WTC11 (cell line): ENCODE measurements at regions of chr4 and their contacts with region 1.

Region 1: DNA sequence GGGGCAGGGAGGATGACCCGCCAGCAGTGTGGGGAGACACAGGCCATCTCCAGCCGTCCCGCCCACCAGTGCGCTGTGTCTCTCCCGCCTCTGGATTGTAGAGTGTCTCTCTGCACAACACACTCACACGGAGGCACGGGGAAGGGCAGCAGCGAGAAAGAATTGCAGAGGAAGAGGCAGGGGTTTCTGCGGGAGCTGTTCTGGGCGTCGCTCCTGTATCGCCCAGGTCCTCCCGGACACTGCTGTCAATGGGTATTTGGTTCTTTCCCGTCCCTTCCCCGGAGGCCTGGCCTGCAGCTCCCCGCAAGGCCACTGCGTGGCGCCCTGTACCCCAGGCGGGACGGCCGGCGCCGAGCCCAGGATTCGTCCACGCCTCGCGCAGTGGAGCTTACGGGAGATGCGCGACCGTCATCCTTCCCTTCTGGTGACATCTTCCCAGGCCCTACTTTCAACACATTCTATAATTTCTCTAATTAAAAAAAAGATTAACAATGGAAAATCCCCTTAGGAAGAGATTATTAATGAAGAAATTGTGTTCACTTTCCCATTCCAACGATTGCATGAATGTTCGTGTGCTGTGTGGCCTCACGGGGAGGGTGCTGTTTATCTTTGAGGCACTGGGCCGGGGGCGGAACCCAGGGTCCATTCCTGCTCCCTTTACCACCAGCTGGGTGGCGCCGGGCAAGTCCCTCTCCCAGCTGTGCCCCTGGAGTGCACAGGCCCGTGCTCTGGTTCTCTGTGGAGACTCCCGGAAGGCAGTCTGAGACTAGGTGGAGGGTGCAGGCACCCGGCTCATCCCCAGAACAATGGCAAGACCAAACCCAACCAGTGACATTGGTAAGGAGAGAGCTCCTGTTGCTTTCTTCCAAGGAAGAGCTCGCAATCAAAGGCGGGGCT is 95.7 kb downstream of the CPZ start:
- DNase-seq: peak; percentile 89
- ATAC-seq: peak; percentile 97
- H3K4me3 Mint-ChIP-seq: no peak overlapping the region
- H3K27ac Mint-ChIP-seq: no peak overlapping the region
- H3K4me1 Mint-ChIP-seq: 0 out of 2 replicates have a peak, but pooled peaks cover 2% of the 10 kb centered on the region
- H3K27me3 Mint-ChIP-seq: peaks cover 48% of the 10 kb centered on the region
- CTCF ChIP-seq: peak; percentile 86

Region 2: GRCh38 chr4:8558080-8558960 is 130.0 kb before region 1 on chr4:
- CTCF ChIA-PET with region 1: no interaction called
- POLR2A ChIA-PET with region 1: no interaction called
- DNase-seq: no peak
- ATAC-seq: no peak
- H3K4me3 Mint-ChIP-seq: no peak overlapping the region
- H3K27ac Mint-ChIP-seq: no peak overlapping the region
- H3K4me1 Mint-ChIP-seq: peaks cover 16% of the 10 kb centered on the region
- H3K27me3 Mint-ChIP-seq: no peaks in the 10 kb centered on the region
- CTCF ChIP-seq: no peak

Region 3: DNA sequence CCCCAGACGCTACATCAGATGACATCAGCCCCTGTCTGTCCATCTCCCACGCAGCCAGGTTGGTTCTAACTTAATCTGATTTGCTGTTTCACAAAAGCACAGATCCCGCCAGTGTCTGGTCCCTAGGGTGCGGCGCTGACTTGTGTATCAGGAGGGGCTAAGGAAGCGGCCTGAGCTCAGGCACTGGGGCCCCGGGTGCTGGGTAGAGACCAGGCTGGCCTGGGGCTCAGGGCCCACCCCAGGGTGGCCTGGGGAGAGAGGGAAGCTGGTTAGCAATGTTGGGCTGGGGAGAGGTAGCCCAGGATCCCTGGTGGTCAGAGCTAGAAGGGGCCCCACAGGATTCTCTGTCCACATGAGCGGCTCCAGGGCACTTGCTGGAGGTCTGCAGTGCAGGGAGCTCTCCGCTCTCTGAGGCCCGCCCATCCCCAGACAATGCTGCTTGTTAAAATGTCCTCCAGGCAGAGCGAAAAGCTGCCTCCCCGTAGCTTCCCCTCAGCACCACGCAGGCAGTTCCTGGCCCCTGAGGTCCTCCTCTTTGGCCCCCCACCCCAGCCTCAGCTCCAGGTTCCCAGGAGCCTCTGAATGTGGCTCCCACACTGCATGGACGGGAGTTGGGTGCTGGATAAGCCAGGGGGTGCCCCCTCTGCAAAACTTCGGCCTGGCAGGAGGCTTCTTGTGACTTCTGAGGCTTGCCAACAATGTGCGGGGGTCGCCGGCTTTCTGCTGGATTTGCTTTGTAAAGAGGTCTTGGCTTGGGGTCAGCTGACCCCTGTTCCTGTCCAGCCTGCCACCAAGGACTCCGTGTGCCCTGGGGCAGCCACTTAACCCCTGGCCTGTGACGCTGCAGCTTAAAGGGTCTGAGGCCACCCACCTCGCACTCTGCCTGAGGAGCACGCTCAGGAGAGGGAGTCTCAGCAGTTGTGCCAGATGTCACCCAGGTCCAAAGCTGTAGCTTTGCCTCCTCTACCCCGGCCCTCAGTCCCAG is 17.2 kb after region 1 on chr4:
- CTCF ChIA-PET with region 1: interaction called, 23 read pairs
- POLR2A ChIA-PET with region 1: no interaction called
- DNase-seq: peak; percentile 15
- ATAC-seq: peak; percentile 40
- H3K4me3 Mint-ChIP-seq: no peak overlapping the region
- H3K27ac Mint-ChIP-seq: no peak overlapping the region
- H3K4me1 Mint-ChIP-seq: peaks cover 9% of the 10 kb centered on the region
- H3K27me3 Mint-ChIP-seq: no peaks in the 10 kb centered on the region
- CTCF ChIP-seq: no peak

Region 4: GRCh38 chr4:8770518-8771257 is 82.4 kb after region 1 on chr4:
- CTCF ChIA-PET with region 1: interaction called, 14 read pairs
- POLR2A ChIA-PET with region 1: no interaction called
- DNase-seq: no peak
- ATAC-seq: peak; percentile 17; the same call in 1 of the 2 replicates
- H3K4me3 Mint-ChIP-seq: no peak overlapping the region
- H3K27ac Mint-ChIP-seq: peak overlapping the region; percentile 8; the same call in 1 of the 2 replicates
- H3K4me1 Mint-ChIP-seq: peaks cover 8% of the 10 kb centered on the region
- H3K27me3 Mint-ChIP-seq: no peaks in the 10 kb centered on the region; the same call in 1 of the 2 replicates
- CTCF ChIP-seq: no peak

Region 5: DNA sequence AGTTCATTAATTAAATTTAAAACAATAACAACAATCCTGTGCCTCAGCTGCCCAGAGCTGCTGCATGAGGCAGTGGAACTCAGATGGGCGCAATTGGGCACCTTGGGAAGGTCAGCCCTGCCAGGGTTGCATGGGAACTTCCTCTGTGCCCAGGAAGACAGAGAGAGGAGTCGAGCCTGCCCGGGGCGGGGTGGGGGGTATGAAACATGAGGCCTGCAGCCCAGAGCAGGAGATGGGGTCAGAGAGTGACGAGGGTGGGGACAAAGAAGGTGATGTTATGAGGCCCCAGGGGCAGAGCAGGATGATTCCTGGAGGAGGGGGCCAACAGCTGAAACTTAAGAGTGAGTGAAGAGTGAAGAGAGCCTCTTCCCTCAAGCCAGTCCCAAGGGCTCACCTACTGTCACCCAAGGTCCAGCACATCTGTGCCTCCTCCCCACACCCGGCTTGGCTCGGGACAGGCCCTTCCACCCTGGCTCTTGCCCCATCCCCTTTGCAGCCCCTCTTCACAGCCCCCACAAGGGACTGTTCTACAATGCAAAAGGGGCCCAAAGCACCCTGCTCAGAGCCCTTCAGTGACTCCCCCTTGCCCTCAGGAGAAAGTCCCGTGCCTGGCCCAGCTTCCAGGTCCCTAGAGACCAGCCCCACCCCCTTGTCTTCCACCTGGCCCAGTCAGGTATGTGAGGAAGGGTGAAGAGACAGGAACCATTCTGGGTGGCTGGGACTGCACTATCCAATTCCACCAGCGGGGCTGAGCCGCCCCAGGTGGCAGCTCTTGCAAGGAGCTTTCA is 151.9 kb after region 1 on chr4:
- CTCF ChIA-PET with region 1: interaction called, 10 read pairs
- POLR2A ChIA-PET with region 1: no interaction called
- DNase-seq: no peak
- ATAC-seq: peak; percentile 78
- H3K4me3 Mint-ChIP-seq: no peak overlapping the region
- H3K27ac Mint-ChIP-seq: no peak overlapping the region
- H3K4me1 Mint-ChIP-seq: peaks cover 11% of the 10 kb centered on the region
- H3K27me3 Mint-ChIP-seq: peaks cover under 1% of the 10 kb centered on the region; the same call in 1 of the 2 replicates
- CTCF ChIP-seq: no peak

Region 6: DNA sequence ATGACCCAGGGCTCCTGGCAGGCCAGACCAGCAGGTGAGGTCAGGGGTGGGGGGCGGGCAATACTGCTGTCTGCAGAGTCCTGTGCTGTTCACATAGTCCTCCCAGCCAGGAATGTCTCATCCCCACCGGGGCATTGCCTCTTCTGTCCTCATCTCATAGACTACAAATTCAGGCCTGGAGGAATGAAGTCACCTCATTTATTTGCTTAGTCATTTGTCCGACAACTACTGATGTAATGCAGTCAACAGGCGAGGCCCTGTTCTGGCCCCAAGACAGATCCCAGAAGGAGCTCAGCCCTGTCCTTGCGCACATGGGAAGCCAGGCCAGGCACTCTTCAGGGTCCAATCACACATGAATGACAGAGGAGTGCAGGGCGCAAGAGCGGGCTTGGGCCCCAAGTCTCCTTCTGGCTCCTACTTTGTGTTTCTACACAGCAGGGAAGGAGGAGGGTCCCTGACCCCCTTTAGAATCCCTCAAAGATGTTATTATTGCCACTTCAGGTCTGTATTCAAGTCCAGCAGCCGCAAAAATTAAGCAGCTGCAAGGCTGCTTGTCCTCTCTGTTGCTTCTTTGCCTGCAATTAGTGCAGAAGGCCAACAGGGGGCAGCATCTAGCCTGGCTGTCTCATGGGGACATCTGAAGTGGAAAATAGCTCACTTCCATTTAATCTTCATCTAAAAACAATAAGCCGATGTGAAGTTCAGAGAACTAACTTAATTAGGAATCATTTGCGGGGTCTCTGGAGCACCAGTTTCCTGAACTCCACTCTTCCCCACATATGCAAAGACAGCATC is 198.5 kb after region 1 on chr4:
- CTCF ChIA-PET with region 1: interaction called, 27 read pairs
- POLR2A ChIA-PET with region 1: no interaction called
- DNase-seq: no peak
- ATAC-seq: no peak
- H3K4me3 Mint-ChIP-seq: no peak overlapping the region
- H3K27ac Mint-ChIP-seq: no peak overlapping the region
- H3K4me1 Mint-ChIP-seq: peaks cover 19% of the 10 kb centered on the region
- H3K27me3 Mint-ChIP-seq: peaks cover 97% of the 10 kb centered on the region
- CTCF ChIP-seq: peak; percentile 60

Region 7: DNA sequence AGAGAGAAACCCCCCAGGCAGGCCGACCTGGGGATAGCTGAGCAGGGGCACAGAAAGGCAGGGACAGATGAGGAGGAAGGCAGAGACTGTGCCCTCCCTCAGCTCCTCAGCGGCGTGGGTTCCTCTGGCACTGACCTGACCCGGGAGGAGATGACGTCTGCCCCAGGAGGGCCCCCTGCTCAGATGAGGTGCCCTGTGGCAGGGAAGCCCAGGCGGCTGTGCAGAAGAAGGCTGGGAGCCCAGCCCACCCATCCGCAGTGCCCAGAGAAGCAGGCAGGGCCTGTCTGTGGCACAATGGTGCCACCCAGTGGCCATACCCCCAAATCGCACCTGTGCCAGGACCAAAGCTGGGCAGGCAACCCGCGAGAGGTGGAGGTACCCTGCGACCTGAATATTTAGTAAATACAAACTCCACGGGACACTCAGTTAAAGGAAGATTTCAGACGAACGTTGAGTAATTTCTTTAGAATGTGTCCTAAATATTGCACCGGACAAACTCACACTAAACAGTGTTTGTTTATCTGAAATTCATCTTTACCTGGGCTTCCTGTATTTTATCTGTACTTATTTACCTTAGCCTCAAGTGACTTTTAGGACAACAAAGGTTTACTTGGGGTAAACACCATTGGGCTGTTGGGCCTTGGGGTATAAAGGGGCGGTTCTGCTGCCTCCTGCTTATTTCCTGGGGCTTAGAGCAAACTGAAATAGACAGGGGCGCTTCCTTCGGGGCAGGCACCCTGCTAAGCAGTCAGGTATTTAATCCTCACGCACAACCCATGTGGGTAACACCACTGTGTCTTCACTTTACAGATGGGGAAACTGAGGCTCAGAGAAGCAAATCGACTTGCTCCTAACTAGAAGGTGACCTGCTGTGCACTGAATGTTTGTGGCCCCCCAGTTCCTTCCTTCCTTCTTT is 229.8 kb after region 1 on chr4:
- CTCF ChIA-PET with region 1: interaction called, 24 read pairs
- POLR2A ChIA-PET with region 1: no interaction called
- DNase-seq: peak; percentile 91
- ATAC-seq: peak; percentile 92
- H3K4me3 Mint-ChIP-seq: no peak overlapping the region
- H3K27ac Mint-ChIP-seq: no peak overlapping the region
- H3K4me1 Mint-ChIP-seq: no peaks in the 10 kb centered on the region
- H3K27me3 Mint-ChIP-seq: peaks cover 13% of the 10 kb centered on the region
- CTCF ChIP-seq: peak; percentile 90